ENCODE measurements at regions of chr20 and their contacts with region 1.

Region 1: GRCh38 chr20:20860078-20860806 is 147.8 kb upstream of the RALGAPA2 start:
- DNase-seq: peak; percentile 67 to 87 (median 79)
- ATAC-seq: peak; percentile 60
- H3K4me3 ChIP-seq: no peak overlapping the region
- H3K4me3 Mint-ChIP-seq: no peak overlapping the region
- H3K27ac ChIP-seq: no peak overlapping the region
- H3K27ac Mint-ChIP-seq: no peak overlapping the region
- H3K4me1 ChIP-seq: no peaks in the 10 kb centered on the region
- H3K4me1 Mint-ChIP-seq: no peaks in the 10 kb centered on the region
- H3K27me3 ChIP-seq: peaks cover 0 to 8% of the 10 kb centered on the region in 2 experiments
- H3K27me3 Mint-ChIP-seq: peaks cover 18% of the 10 kb centered on the region
- CTCF ChIP-seq: peak; percentile 91

Region 2: GRCh38 chr20:21571841-21572690 is 711.8 kb after region 1 on chr20:
- CTCF ChIA-PET with region 1: interaction called, 3 read pairs
- POLR2A ChIA-PET with region 1: no interaction called
- intact Hi-C with region 1: loop called in 1 of 2 experiments (anchors 5 kb)
- DNase-seq: peak in 7 of 14 experiments; percentile 3 to 59 (median 15)
- ATAC-seq: no peak
- H3K4me3 ChIP-seq: no peak overlapping the region
- H3K4me3 Mint-ChIP-seq: no peak overlapping the region
- H3K27ac ChIP-seq: no peak overlapping the region
- H3K27ac Mint-ChIP-seq: no peak overlapping the region
- H3K4me1 ChIP-seq: peaks cover 8% of the 10 kb centered on the region
- H3K4me1 Mint-ChIP-seq: no peaks in the 10 kb centered on the region
- H3K27me3 ChIP-seq: no peaks in the 10 kb centered on the region
- H3K27me3 Mint-ChIP-seq: peaks cover 34% of the 10 kb centered on the region
- CTCF ChIP-seq: peak; percentile 86

Region 3: DNA sequence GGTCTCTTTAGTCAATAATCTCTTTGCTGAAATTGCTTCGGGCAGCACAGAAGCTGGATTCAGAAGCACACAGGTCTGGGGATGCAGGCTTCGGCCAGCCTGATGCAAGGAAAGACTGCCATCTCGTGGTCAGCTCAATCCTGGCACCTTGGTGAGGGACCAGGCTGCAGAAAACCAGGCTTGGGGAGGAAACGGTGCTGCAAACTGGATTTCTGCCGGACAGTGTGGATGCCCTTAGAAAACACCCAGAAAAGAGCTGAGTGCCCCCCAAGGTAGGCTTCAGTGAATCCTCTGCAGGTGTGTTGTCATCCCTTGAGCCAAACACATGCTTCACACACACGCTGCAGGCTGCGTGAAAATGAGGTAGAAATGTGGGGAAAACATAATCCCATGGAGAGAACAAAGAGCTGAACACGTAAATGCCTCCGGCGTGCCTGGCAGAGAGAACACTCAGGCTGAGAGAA is 755.4 kb after region 1 on chr20:
- CTCF ChIA-PET with region 1: interaction called, 3 read pairs
- POLR2A ChIA-PET with region 1: no interaction called
- intact Hi-C with region 1: loop called (anchors 10 kb)
- DNase-seq: peak; percentile 8 to 58 (median 28)
- ATAC-seq: no peak
- H3K4me3 ChIP-seq: no peak overlapping the region
- H3K4me3 Mint-ChIP-seq: no peak overlapping the region
- H3K27ac ChIP-seq: no peak overlapping the region
- H3K27ac Mint-ChIP-seq: no peak overlapping the region
- H3K4me1 ChIP-seq: no peaks in the 10 kb centered on the region
- H3K4me1 Mint-ChIP-seq: no peaks in the 10 kb centered on the region
- H3K27me3 ChIP-seq: peaks cover 0 to 5% of the 10 kb centered on the region in 2 experiments
- H3K27me3 Mint-ChIP-seq: peaks cover 62% of the 10 kb centered on the region
- CTCF ChIP-seq: peak; percentile 59